ENCODE measurements at regions of chr22 and their contacts with region 1.

Region 1: GRCh38 chr22:39622881-39623367 is 52.4 kb downstream of the CACNA1I start:
- DNase-seq: peak; percentile 9
- ATAC-seq: peak; percentile 70
- H3K4me3 ChIP-seq: no peak overlapping the region
- H3K27ac ChIP-seq: no peak overlapping the region
- H3K4me1 ChIP-seq: no peaks in the 10 kb centered on the region
- H3K27me3 ChIP-seq: peaks cover 37% of the 10 kb centered on the region
- CTCF ChIP-seq: peak; percentile 52
- POLR2A ChIP-seq: no peak
- RAD21 ChIP-seq: peak; percentile 67

Region 2: GRCh38 chr22:39601180-39601535 is 21.8 kb before region 1 on chr22:
- CTCF ChIA-PET with region 1: no interaction called
- POLR2A ChIA-PET with region 1: no interaction called
- dilution Hi-C with region 1: no loop called
- in situ Hi-C with region 1: no loop called
- intact Hi-C with region 1: no loop called
- DNase-seq: no peak
- ATAC-seq: no peak
- H3K4me3 ChIP-seq: no peak overlapping the region
- H3K27ac ChIP-seq: no peak overlapping the region
- H3K4me1 ChIP-seq: no peaks in the 10 kb centered on the region; the same call in 1 of the 2 replicates
- H3K27me3 ChIP-seq: peaks cover 43% of the 10 kb centered on the region
- CTCF ChIP-seq: no peak
- POLR2A ChIP-seq: no peak
- RAD21 ChIP-seq: no peak

Region 3: DNA sequence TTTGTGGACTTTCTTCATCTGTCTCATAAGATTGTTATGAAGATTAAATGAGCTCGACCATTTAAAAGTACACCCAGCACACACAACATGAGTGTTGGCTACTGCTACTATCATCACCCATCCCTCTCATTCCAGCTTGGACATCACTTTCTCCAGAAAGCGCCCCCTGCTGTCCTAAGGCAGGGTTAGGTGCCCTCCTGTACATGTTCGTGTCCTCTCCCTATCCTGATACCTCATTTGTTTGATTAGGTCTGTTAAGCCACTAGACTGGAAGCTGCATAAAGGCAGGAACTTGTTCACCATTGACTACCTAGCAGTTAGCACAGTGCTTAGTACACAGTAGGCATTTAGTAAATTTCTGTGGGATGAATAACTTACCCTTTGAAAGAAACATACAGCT is 185.2 kb after region 1 on chr22:
- CTCF ChIA-PET with region 1: no interaction called
- POLR2A ChIA-PET with region 1: no interaction called
- dilution Hi-C with region 1: no loop called
- in situ Hi-C with region 1: no loop called
- intact Hi-C with region 1: loop called (anchors 10 kb)
- DNase-seq: peak; percentile 6
- ATAC-seq: peak; percentile 35; the same call in 1 of the 2 replicates
- H3K4me3 ChIP-seq: no peak overlapping the region
- H3K27ac ChIP-seq: no peak overlapping the region
- H3K4me1 ChIP-seq: no peaks in the 10 kb centered on the region
- H3K27me3 ChIP-seq: peaks cover 67% of the 10 kb centered on the region
- CTCF ChIP-seq: peak; percentile 39
- POLR2A ChIP-seq: no peak
- RAD21 ChIP-seq: peak; percentile 35; the same call in 1 of the 2 replicates

Region 4: GRCh38 chr22:40024201-40025061 is 401.5 kb after region 1 on chr22:
- CTCF ChIA-PET with region 1: interaction called, 3 read pairs
- POLR2A ChIA-PET with region 1: no interaction called
- dilution Hi-C with region 1: no loop called
- in situ Hi-C with region 1: no loop called
- intact Hi-C with region 1: loop called (anchors 2 kb)
- DNase-seq: peak; percentile 51
- ATAC-seq: peak; percentile 98
- H3K4me3 ChIP-seq: no peak overlapping the region
- H3K27ac ChIP-seq: no peak overlapping the region
- H3K4me1 ChIP-seq: no peaks in the 10 kb centered on the region
- H3K27me3 ChIP-seq: peaks cover 54% of the 10 kb centered on the region
- CTCF ChIP-seq: peak; percentile 97
- POLR2A ChIP-seq: peak; percentile 33; the same call in 1 of the 2 replicates
- RAD21 ChIP-seq: peak; percentile 97

Measured in IMR-90 (cell line).